ENCODE measurements at regions of chr21 and their contacts with region 1.

Region 1: DNA sequence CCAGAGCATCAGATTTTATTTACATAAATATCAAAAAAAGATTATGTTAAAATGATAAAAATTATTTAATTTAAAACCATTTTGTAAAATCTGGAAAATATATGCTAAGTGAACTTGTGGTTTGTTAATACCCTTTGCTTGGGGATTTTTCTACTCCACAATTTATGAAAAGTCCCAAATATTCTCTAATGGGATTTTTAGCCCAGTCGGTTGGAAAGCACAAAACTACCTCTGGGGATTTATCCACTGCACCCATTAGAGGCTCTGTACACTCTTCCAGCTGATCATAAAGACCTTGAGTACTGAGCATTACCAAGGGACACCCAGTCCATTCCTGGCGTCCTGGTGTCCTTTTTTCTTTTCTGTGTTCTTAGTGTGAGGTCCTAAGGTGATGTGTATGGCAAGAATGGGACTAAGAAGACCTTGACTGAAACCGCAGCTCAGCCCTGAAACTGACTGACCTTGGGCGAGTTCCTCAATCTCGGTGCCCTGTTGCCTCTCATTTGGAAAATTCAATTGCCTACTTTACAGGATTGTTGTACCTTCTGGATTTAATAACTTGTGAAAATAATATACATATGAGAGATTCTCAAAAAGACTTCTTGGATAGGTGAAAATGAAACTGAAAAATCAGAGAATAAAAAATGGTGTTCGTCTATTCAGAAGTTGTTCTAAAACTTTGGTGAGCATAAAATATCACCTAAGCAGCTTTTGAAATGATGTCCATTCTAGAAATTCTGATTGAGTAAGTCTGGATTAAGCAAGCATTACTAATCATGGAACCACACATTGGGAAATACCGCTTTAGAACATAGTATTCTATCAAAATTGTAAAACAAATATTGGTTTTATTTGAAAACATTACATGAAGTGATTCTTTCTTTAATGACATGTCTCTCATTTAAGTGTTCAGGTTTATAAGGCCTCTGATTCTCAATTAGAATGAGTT is 21.5 kb upstream of the SAMSN1 start:
- DNase-seq: no peak
- ATAC-seq: peak; percentile 49
- H3K4me3 Mint-ChIP-seq: peak overlapping the region; percentile 13
- H3K27ac Mint-ChIP-seq: peak overlapping the region; percentile 69
- H3K4me1 Mint-ChIP-seq: peaks cover 28% of the 10 kb centered on the region
- H3K27me3 Mint-ChIP-seq: no peaks in the 10 kb centered on the region
- CTCF ChIP-seq: no peak

Region 2: DNA sequence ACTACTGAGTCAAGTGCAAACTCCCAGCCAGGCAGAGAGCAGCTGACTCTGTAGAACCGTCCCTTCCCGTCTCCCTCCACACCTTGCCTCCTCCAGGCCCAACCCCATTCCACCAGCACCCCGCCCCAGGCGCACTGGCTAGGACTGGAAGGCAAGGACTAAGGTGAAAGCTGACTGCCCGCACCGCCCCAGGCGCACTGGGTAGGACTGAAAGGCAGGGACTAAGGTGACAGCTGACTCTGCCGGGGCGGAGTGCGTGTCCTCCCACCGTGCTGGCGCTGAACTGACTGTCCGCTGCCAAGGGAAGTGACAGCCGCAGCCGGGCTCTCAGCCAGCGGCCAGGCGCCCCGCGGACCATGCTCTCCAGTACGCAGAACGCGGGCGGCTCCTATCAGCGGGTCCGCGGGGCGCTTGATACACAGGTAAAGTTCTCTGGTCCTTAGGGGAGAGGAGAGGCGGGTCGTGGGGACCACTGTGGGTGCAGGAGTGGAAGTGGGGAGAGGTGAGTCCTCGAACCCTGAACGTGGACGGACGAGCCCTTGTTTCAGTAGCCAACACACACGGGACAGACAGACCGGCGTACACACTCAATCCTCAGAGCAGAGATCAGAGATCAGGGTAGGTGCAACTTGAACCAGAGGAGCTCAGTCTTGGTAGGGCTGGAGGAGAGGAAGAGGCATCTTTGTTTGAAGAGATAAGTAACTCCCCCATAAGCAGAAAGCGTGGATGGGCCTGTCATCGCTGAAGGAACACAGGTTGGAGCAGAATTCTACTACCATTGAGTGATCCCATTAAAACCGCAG is 293.7 kb before region 1 on chr21:
- CTCF ChIA-PET with region 1: no interaction called
- POLR2A ChIA-PET with region 1: no interaction called
- intact Hi-C with region 1: no loop called
- DNase-seq: no peak
- ATAC-seq: no peak
- H3K4me3 Mint-ChIP-seq: no peak overlapping the region
- H3K27ac Mint-ChIP-seq: no peak overlapping the region
- H3K4me1 Mint-ChIP-seq: no peaks in the 10 kb centered on the region
- H3K27me3 Mint-ChIP-seq: peaks cover 11% of the 10 kb centered on the region
- CTCF ChIP-seq: no peak

Region 3: GRCh38 chr21:14581902-14582457 is 14.4 kb after region 1 on chr21:
- CTCF ChIA-PET with region 1: no interaction called
- POLR2A ChIA-PET with region 1: interaction called, 7 read pairs
- intact Hi-C with region 1: loop called (anchors 2 kb)
- DNase-seq: no peak
- ATAC-seq: no peak
- H3K4me3 Mint-ChIP-seq: no peak overlapping the region
- H3K27ac Mint-ChIP-seq: no peak overlapping the region
- H3K4me1 Mint-ChIP-seq: peaks cover 5% of the 10 kb centered on the region
- H3K27me3 Mint-ChIP-seq: no peaks in the 10 kb centered on the region
- CTCF ChIP-seq: no peak

Region 4: DNA sequence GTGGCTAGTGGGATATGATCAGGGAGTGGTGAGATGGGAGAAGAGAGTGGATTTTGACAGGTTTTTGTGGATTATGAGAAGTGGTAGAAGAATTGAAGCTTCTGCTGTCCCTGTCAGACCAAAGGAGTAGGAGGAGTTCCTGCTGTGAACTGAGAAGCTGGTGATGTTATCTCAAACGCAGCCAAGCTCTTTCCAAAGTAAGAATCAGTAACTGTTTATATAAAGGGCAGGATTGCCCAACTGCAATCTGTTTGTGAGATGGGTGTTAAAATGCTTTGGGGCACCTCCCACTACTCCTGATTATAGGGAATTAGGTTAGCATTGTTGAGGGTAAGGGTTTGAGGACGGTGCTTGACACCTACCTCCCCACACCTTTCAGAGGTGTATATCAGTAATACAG is 1101.6 kb after region 1 on chr21:
- CTCF ChIA-PET with region 1: no interaction called
- POLR2A ChIA-PET with region 1: no interaction called
- intact Hi-C with region 1: no loop called
- DNase-seq: no peak
- ATAC-seq: no peak
- H3K4me3 Mint-ChIP-seq: no peak overlapping the region
- H3K27ac Mint-ChIP-seq: no peak overlapping the region
- H3K4me1 Mint-ChIP-seq: no peaks in the 10 kb centered on the region
- H3K27me3 Mint-ChIP-seq: no peaks in the 10 kb centered on the region
- CTCF ChIP-seq: no peak